ENCODE measurements at regions of chr3 and their contacts with region 1.

Region 1: DNA sequence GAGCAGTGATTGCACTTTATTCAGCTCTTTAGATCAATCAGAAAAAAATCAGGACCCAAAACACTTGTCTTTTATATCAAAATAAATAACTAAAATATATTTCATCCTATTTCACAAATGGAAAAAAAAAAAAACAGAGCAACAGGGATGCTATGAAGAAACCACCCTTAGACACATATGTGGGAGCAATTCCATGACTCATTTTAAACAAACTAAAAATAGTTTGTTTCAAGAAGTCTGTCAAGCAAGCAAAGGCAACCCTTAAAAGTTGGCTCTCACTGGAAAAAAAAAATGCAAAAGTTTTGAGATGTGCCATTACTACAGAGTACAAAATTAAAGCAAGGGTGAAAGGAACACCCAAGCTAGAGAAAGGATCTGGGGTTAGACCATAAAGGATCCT is 5.7 kb downstream of the ATP13A3 start:
- DNase-seq: peak; percentile 88
- H3K4me3 ChIP-seq: peak overlapping the region; percentile 49
- H3K27ac ChIP-seq: peak overlapping the region; percentile 71
- H3K4me1 ChIP-seq: peaks cover 67% of the 10 kb centered on the region
- H3K27me3 ChIP-seq: no peaks in the 10 kb centered on the region

Region 2: GRCh38 chr3:194573691-194574437 is 92.8 kb after region 1 on chr3:
- in situ Hi-C with region 1: loop called (anchors 5 kb)
- DNase-seq: peak; percentile 52
- H3K4me3 ChIP-seq: no peak overlapping the region
- H3K27ac ChIP-seq: peak overlapping the region; percentile 98
- H3K4me1 ChIP-seq: peaks cover 62% of the 10 kb centered on the region
- H3K27me3 ChIP-seq: no peaks in the 10 kb centered on the region

Region 3: GRCh38 chr3:194952841-194953241 is 471.7 kb after region 1 on chr3:
- in situ Hi-C with region 1: no loop called
- DNase-seq: no peak
- H3K4me3 ChIP-seq: no peak overlapping the region
- H3K27ac ChIP-seq: no peak overlapping the region
- H3K4me1 ChIP-seq: no peaks in the 10 kb centered on the region
- H3K27me3 ChIP-seq: peaks cover 4% of the 10 kb centered on the region; the same call in 1 of the 2 replicates